ENCODE measurements at regions of chr11 and their contacts with region 1.

Region 1: GRCh38 chr11:2930704-2931428 is 1.6 kb upstream of the PHLDA2 start:
- DNase-seq: peak in 2 of 3 donors; percentile 26 to 34
- H3K4me3 ChIP-seq: peak overlapping the region in 5 of 7 experiments; percentile 19 to 68 (median 47)
- H3K27ac ChIP-seq: no peak overlapping the region
- H3K4me1 ChIP-seq: peaks cover 0 to 59% (median 53%) of the 10 kb centered on the region in 4 experiments
- H3K27me3 ChIP-seq: peaks cover 0 to 46% (median 15%) of the 10 kb centered on the region in 5 experiments

Region 2: DNA sequence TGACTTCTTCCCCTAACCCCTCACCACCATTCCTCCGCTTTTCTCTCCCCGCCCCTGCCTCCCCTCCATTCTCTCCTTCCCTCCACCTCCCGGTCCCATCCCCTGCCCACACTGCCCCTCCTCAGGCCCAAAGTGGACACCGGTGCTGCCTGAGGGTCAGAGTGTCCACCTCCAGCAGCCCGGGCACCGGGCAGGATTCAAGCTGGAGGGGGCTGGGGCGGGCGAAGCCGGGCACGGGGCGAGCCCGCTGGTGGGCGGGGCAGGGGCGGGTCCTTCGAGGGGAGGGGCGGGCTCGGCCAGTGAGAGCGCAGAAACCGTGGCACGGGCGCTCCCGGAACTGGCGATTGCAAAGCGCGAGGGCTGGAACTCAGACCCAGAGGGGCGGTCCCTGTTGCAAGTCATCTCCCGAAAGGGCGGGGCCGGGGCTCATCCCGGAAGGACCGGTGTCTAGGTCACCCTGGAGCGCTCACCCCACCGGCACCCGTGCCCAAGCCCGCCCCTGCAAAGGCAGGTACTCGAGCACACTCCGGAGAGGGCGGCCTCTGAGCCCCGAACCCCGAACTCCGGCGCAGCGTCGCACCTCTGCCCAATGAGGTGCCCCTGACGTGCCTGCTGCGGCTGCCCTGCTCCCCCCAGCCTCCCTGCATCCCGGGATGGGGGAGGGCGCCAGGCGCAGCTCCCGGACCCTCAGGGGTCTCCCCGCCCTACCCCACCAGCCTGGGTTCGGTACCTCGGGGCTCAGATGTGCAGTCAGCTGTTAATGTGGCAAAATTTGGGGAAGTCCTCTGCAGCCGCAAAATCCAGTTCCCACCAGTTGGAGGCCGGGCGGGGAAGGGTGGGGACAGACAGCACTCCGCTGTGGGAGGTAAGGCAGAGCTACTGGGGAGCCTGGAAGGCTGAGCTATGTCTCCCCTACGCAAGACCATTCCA is 28.7 kb before region 1 on chr11:
- CTCF ChIA-PET with region 1: interaction called, 11 read pairs
- POLR2A ChIA-PET with region 1: interaction called, 5 read pairs
- DNase-seq: peak; percentile 67 to 88 (median 86)
- H3K4me3 ChIP-seq: peak overlapping the region in 6 of 7 experiments; percentile 39 to 75 (median 60)
- H3K27ac ChIP-seq: peak overlapping the region in 1 of 2 experiments; percentile 73
- H3K4me1 ChIP-seq: peaks cover 0 to 58% (median 43%) of the 10 kb centered on the region in 4 experiments
- H3K27me3 ChIP-seq: no peaks in the 10 kb centered on the region

Region 3: DNA sequence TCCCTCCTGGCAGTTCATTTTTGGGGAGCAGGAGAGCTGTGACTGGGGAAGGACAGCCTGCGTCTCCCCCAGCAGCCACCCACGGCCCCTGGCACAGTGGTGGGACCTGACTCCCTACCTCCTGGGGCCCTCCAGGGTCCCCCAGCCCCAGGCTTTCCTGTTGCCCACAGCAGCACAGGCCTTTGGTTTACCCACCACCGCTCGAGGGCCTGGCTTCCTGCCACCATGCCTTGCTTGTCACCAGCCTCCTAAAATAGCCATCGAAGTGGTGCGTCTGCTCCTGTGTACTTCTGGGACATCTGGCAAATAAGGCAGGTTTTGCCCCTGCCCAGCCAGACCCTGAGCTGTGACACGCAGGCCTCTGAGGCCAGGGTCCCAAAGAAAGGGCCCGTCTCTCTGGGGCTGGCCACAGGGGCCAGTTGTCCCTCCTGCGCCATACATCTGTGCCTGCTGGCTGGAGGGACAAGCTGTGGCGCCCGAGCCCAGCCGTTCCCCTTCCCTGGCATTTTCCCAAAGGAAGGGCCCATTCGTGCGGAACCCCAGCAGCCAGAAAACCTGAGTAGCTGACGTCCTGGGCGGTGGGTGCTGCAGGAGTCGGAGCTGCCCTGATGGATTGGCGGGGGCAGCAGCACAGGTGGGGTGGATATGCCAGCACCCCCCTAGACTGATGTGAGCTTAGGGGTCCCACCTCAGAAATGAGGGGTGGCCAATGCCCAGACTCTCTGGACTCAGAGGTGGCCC is 16.2 kb before region 1 on chr11:
- CTCF ChIA-PET with region 1: interaction called, 19 read pairs
- POLR2A ChIA-PET with region 1: interaction called, 3 read pairs
- DNase-seq: peak in 2 of 3 donors; percentile 67 to 69
- H3K4me3 ChIP-seq: peak overlapping the region in 1 of 7 experiments; percentile 33
- H3K27ac ChIP-seq: no peak overlapping the region
- H3K4me1 ChIP-seq: peaks cover 0 to 39% (median 30%) of the 10 kb centered on the region in 4 experiments
- H3K27me3 ChIP-seq: peaks cover 0 to 2% (median 0%) of the 10 kb centered on the region in 5 experiments

Region 4: DNA sequence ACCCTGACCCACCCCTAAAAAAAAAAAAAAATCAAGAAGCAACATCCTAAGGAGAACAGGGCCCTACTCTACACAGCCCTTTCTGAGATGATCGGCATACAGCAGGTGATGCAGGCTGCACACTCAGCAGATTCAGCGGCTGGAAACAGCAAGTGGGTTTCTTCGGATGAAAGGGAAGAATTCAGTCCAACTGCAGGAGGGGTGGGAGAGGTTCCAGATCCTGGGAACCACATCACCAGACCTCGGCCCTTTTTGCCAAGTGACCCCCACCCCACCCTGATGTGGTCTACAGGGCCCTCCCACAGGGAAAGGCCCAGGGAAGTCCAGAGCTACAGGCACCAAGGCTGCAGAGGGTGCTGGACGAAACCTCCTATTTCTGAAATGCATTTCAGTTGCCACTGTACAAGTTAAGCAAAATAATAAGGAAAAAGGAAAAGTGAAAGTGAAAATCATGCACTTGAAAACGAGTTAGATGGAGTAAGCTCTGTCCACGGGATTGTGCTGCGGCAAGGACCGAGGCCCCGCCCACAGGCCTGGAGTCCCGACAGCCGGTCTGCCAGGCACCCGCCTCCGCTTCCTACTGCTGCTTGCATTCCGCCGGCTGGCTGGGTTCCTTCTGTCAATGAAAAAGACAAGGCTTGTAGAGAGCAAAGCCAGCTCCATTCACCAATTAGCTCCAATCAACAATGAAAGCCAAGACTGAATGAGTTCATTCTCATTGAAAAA is 14.3 kb after region 1 on chr11:
- CTCF ChIA-PET with region 1: interaction called, 14 read pairs
- POLR2A ChIA-PET with region 1: interaction called, 5 read pairs
- DNase-seq: peak; percentile 83 to 95 (median 94)
- H3K4me3 ChIP-seq: peak overlapping the region in 3 of 7 experiments; percentile 30 to 54 (median 54)
- H3K27ac ChIP-seq: peak overlapping the region in 1 of 2 experiments; percentile 56
- H3K4me1 ChIP-seq: peaks cover 0 to 39% (median 26%) of the 10 kb centered on the region in 4 experiments
- H3K27me3 ChIP-seq: no peaks in the 10 kb centered on the region

Measured in common myeloid progenitor, CD34-positive (primary cell).